ENCODE measurements at regions of chr7 and their contacts with region 1.

Region 1: DNA sequence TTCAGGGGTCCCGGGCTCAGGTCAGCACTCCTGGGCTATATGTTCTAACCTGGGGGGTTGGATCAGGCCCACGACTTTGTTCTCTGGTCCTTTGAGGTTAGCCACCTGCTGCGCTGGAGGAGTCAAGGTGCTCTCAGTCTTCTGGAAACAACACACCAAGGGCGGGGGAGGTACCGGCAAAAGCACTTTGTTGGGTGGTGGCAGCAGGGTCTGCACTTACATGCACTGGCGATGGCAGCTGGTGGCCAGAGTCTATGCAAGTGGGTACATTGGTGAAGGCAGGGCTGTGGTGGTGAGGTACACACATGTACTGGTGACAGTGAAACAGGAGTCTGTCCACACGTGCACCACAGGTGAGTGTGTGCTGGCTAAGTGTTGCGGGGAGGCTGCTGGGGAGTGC is 194.2 kb upstream of the MAGI2 start:
- DNase-seq: no peak
- H3K4me3 ChIP-seq: no peak overlapping the region
- H3K27ac ChIP-seq: no peak overlapping the region
- H3K4me1 ChIP-seq: no peaks in the 10 kb centered on the region
- H3K27me3 ChIP-seq: no peaks in the 10 kb centered on the region
- CTCF ChIP-seq: no peak
- EP300 ChIP-seq: no peak
- POLR2A ChIP-seq: no peak

Region 2: DNA sequence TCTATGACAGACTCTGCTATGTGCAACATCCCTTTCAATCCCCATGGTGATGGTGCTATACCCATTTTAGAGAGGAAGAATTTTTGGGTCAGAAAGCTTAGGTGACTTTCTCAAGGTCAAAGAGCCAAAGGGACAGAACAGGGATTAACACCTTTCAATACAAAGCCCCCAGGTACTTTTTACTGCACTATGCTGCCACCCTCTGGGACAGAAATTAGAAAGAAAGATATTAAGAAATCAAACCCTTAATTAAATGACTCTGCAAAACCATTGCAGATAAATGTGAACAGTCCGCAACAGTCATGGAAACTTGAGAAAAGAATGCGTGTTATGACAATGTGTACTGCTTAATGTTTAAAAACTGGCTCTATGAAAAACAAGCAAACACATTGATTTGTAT is 867.9 kb before region 1 on chr7:
- in situ Hi-C with region 1: no loop called
- intact Hi-C with region 1: no loop called
- DNase-seq: no peak
- H3K4me3 ChIP-seq: no peak overlapping the region
- H3K27ac ChIP-seq: no peak overlapping the region
- H3K4me1 ChIP-seq: no peaks in the 10 kb centered on the region
- H3K27me3 ChIP-seq: no peaks in the 10 kb centered on the region
- CTCF ChIP-seq: no peak
- EP300 ChIP-seq: no peak
- POLR2A ChIP-seq: no peak

Region 3: DNA sequence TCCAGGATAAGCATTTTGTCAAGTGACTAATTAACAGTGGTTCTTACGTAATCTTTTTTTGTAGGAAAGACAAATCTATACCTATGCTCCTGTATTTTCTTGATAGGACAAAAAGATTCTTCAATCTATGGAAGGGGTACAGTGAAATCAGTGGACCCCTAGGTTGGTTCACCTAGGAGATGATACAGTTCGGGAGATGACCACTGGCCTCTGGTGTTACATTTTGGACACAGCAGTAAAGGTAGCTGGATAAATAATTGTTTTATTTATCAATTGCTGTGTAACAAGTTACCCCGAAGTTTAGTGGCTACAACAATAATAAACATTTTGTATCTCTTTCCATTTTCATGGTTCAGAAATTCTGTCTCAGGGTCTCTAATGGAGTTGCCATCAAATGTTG is 94.0 kb after region 1 on chr7:
- in situ Hi-C with region 1: loop called in 1 of 4 experiments (anchors 25 kb)
- intact Hi-C with region 1: no loop called
- DNase-seq: no peak
- H3K4me3 ChIP-seq: no peak overlapping the region
- H3K27ac ChIP-seq: no peak overlapping the region
- H3K4me1 ChIP-seq: no peaks in the 10 kb centered on the region
- H3K27me3 ChIP-seq: no peaks in the 10 kb centered on the region
- CTCF ChIP-seq: no peak
- EP300 ChIP-seq: no peak
- POLR2A ChIP-seq: no peak

Measured in transverse colon (tissue), 4 donors.